ENCODE measurements at regions of chr19 and their contacts with region 1.

Region 1: GRCh38 chr19:58154679-58155648 is 4.4 kb upstream of the ZNF329 start:
- DNase-seq: peak; percentile 97 to 99
- ATAC-seq: peak; percentile 85 to 97 (median 87)
- H3K4me3 ChIP-seq: peak overlapping the region; percentile 75
- H3K4me3 Mint-ChIP-seq: peak overlapping the region; percentile 82
- H3K27ac ChIP-seq: peak overlapping the region; percentile 73
- H3K27ac Mint-ChIP-seq: peak overlapping the region; percentile 53 to 82
- H3K4me1 ChIP-seq: peaks cover 21% of the 10 kb centered on the region
- H3K4me1 Mint-ChIP-seq: peaks cover 9 to 10% of the 10 kb centered on the region in 2 donors
- H3K27me3 ChIP-seq: no peaks in the 10 kb centered on the region
- H3K27me3 Mint-ChIP-seq: no peaks in the 10 kb centered on the region
- CTCF ChIP-seq: peak; percentile 88

Region 2: GRCh38 chr19:57362997-57363705 is 791.8 kb before region 1 on chr19 and contains the starts of genes TRAPPC2B and ZNF547:
- intact Hi-C with region 1: loop called (anchors 1 kb)
- DNase-seq: peak; percentile 99 to 100
- ATAC-seq: peak; percentile 88 to 96 (median 90)
- H3K4me3 ChIP-seq: peak within 1 kb of the TSS; percentile 56
- H3K4me3 Mint-ChIP-seq: peak within 1 kb of the TSS; percentile 92
- H3K27ac ChIP-seq: peak within 1 kb of the TSS; percentile 93
- H3K27ac Mint-ChIP-seq: peak within 1 kb of the TSS; percentile 96 to 98
- H3K4me1 ChIP-seq: peaks cover 14% of the 10 kb centered on the region
- H3K4me1 Mint-ChIP-seq: peaks cover 18 to 19% of the 10 kb centered on the region in 2 donors
- H3K27me3 ChIP-seq: no peaks in the 10 kb centered on the region
- H3K27me3 Mint-ChIP-seq: no peaks in the 10 kb centered on the region
- CTCF ChIP-seq: no peak
- total RNA-seq, gene TRAPPC2B: 7.4 to 15.6 (median 13.7) TPM
- total RNA-seq, gene ZNF547: 0.48 to 1.2 (median 0.92) TPM

Region 3: DNA sequence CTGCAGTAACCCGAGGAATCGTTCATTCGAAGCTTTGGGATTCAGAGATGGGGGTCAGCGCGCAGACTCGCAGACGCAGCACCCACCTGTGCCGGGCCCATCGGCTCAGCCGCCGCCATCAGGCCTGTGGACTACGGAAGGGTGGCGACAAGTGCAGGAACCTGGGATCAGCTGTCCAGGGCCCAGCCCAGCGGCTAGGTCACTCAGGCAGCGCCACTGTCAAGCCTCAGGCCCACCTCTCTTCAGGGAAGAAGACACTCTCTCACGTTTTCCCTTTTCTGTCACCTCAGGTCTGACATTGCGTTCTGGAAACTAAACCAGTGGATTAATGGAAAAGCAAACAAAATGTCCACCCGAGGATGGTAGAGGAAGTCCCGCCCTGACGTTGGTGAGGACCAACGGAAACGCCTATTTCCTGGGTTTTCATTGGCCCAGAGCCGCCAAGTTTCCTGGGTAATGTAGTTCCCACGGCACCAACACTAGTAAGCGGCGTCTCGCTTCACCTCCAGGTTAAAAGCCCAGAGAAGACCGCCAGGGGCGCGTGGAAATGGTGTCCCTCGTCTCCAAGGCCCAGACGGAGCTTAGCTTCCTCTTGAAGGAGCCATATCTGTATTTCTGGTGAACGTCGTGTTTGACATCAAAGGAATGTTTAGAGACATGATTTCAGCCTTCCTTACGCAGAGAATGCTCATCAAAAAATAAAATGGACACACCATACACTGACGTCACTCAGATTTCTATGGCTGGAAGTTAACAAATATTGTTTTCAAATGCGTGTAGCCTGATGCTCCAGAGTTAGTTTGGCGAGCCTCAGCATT is 677.6 kb before region 1 on chr19 and contains the start of gene ZNF772:
- intact Hi-C with region 1: loop called (anchors 10 kb)
- DNase-seq: peak; percentile 77 to 95
- ATAC-seq: peak; percentile 97 to 100 (median 100)
- H3K4me3 ChIP-seq: peak within 1 kb of the TSS; percentile 63
- H3K4me3 Mint-ChIP-seq: peak within 1 kb of the TSS; percentile 96
- H3K27ac ChIP-seq: peak within 1 kb of the TSS; percentile 75
- H3K27ac Mint-ChIP-seq: peak within 1 kb of the TSS; percentile 94 to 97
- H3K4me1 ChIP-seq: peaks cover 15% of the 10 kb centered on the region
- H3K4me1 Mint-ChIP-seq: peaks cover 18 to 24% of the 10 kb centered on the region in 2 donors
- H3K27me3 ChIP-seq: no peaks in the 10 kb centered on the region
- H3K27me3 Mint-ChIP-seq: peaks cover 8 to 14% of the 10 kb centered on the region in 2 donors
- CTCF ChIP-seq: peak; percentile 50
- total RNA-seq, gene ZNF772: 1.3 to 3.5 (median 1.4) TPM

Region 4: GRCh38 chr19:58002384-58003173 is 152.4 kb before region 1 on chr19 and contains the start of gene ZNF606:
- intact Hi-C with region 1: loop called (anchors 5 kb)
- DNase-seq: peak; percentile 87 to 92
- ATAC-seq: peak; percentile 95 to 98 (median 98)
- H3K4me3 ChIP-seq: peak within 1 kb of the TSS; percentile 80
- H3K4me3 Mint-ChIP-seq: peak within 1 kb of the TSS; percentile 92
- H3K27ac ChIP-seq: peak within 1 kb of the TSS; percentile 97
- H3K27ac Mint-ChIP-seq: peak within 1 kb of the TSS; percentile 91 to 93
- H3K4me1 ChIP-seq: peaks cover 21% of the 10 kb centered on the region
- H3K4me1 Mint-ChIP-seq: peaks cover 26 to 39% of the 10 kb centered on the region in 2 donors
- H3K27me3 ChIP-seq: no peaks in the 10 kb centered on the region
- H3K27me3 Mint-ChIP-seq: no peaks in the 10 kb centered on the region
- CTCF ChIP-seq: no peak
- total RNA-seq, gene ZNF606: 8.9 to 13.5 (median 12.5) TPM

Region 5: GRCh38 chr19:58097781-58098681 is 56.9 kb before region 1 on chr19 and contains the start of gene ZSCAN18:
- intact Hi-C with region 1: loop called (anchors 2 kb)
- DNase-seq: peak; percentile 97 to 98
- ATAC-seq: peak; percentile 92 to 99 (median 97)
- H3K4me3 ChIP-seq: peak within 1 kb of the TSS; percentile 81
- H3K4me3 Mint-ChIP-seq: peak within 1 kb of the TSS; percentile 88
- H3K27ac ChIP-seq: peak within 1 kb of the TSS; percentile 99
- H3K27ac Mint-ChIP-seq: peak within 1 kb of the TSS; percentile 98 to 99
- H3K4me1 ChIP-seq: peaks cover 15% of the 10 kb centered on the region
- H3K4me1 Mint-ChIP-seq: peaks cover 14 to 34% of the 10 kb centered on the region in 2 donors
- H3K27me3 ChIP-seq: no peaks in the 10 kb centered on the region
- H3K27me3 Mint-ChIP-seq: peaks cover 0 to 3% of the 10 kb centered on the region in 2 donors
- CTCF ChIP-seq: no peak
- total RNA-seq, gene ZSCAN18: 29.9 to 42.7 (median 35.9) TPM

Region 6: GRCh38 chr19:58128041-58128685 is 26.8 kb before region 1 on chr19:
- intact Hi-C with region 1: no loop called
- DNase-seq: no peak
- ATAC-seq: no peak
- H3K4me3 ChIP-seq: no peak overlapping the region
- H3K4me3 Mint-ChIP-seq: no peak overlapping the region
- H3K27ac ChIP-seq: no peak overlapping the region
- H3K27ac Mint-ChIP-seq: no peak overlapping the region
- H3K4me1 ChIP-seq: no peaks in the 10 kb centered on the region
- H3K4me1 Mint-ChIP-seq: no peaks in the 10 kb centered on the region
- H3K27me3 ChIP-seq: no peaks in the 10 kb centered on the region
- H3K27me3 Mint-ChIP-seq: no peaks in the 10 kb centered on the region
- CTCF ChIP-seq: no peak

Measured in natural killer cell (primary cell).